ENCODE measurements at regions of chr12 and their contacts with region 1.

Region 1: GRCh38 chr12:126147321-126147720 is 1082.1 kb downstream of the AACS start:
- DNase-seq: no peak
- H3K4me3 ChIP-seq: no peak overlapping the region
- CTCF ChIP-seq: no peak
- POLR2A ChIP-seq: no peak

Region 2: DNA sequence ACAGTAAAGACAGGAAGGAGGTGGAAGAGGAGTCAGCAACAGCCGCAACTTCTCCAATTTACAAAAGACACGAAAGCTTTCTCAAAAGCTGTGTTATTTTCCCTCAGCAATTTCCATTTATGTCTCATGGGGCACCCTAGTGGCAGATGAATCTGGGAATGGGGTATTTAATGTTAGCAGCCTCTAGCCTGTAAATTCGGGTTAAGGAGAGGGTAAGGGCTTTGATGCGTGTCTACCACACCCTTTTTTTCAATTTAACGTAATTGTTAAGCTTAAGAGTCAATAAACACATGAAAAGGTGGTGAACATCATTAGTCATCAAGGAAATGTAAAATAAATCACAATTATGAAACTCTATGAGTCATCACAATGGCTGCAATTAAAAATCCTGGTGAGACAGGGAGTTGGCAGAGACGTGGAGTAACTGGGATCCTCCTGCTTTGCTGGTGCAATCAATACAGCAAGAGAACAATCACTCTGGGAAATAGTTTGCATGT is 95.7 kb before region 1 on chr12:
- intact Hi-C with region 1: no loop called
- DNase-seq: no peak
- H3K4me3 ChIP-seq: no peak overlapping the region
- CTCF ChIP-seq: no peak
- POLR2A ChIP-seq: no peak

Region 3: GRCh38 chr12:126117502-126117901 is 29.8 kb before region 1 on chr12:
- intact Hi-C with region 1: loop called (anchors 1 kb)
- DNase-seq: no peak
- H3K4me3 ChIP-seq: no peak overlapping the region
- CTCF ChIP-seq: no peak
- POLR2A ChIP-seq: no peak